ENCODE measurements at regions of chr1 and their contacts with region 1.

Region 1: GRCh38 chr1:110460253-110461220 is 9.6 kb downstream of the PROK1 start:
- DNase-seq: peak; percentile 77
- ATAC-seq: peak; percentile 84
- H3K4me3 ChIP-seq: no peak overlapping the region
- H3K27ac ChIP-seq: no peak overlapping the region
- H3K4me1 ChIP-seq: peaks cover 20% of the 10 kb centered on the region
- H3K27me3 ChIP-seq: peaks cover 15% of the 10 kb centered on the region
- CTCF ChIP-seq: peak; percentile 99
- POLR2A ChIP-seq: 0 out of 2 replicates have a peak, but pooled peaks have one; percentile 41
- RAD21 ChIP-seq: peak; percentile 100

Region 2: GRCh38 chr1:110053557-110054428 is 406.7 kb before region 1 on chr1:
- CTCF ChIA-PET with region 1: no interaction called
- POLR2A ChIA-PET with region 1: no interaction called
- dilution Hi-C with region 1: no loop called
- in situ Hi-C with region 1: loop called (anchors 10 kb)
- intact Hi-C with region 1: no loop called
- DNase-seq: peak; percentile 25
- ATAC-seq: peak; percentile 62
- H3K4me3 ChIP-seq: no peak overlapping the region
- H3K27ac ChIP-seq: no peak overlapping the region
- H3K4me1 ChIP-seq: peaks cover 36% of the 10 kb centered on the region
- H3K27me3 ChIP-seq: no peaks in the 10 kb centered on the region
- CTCF ChIP-seq: peak; percentile 89
- POLR2A ChIP-seq: no peak
- RAD21 ChIP-seq: peak; percentile 90

Region 3: GRCh38 chr1:110196917-110197765 is 263.4 kb before region 1 on chr1:
- CTCF ChIA-PET with region 1: interaction called, 30 read pairs
- POLR2A ChIA-PET with region 1: no interaction called
- dilution Hi-C with region 1: no loop called
- in situ Hi-C with region 1: loop called (anchors 5 kb)
- intact Hi-C with region 1: loop called (anchors 1 kb)
- DNase-seq: peak; percentile 41
- ATAC-seq: peak; percentile 97
- H3K4me3 ChIP-seq: no peak overlapping the region
- H3K27ac ChIP-seq: no peak overlapping the region
- H3K4me1 ChIP-seq: 0 out of 2 replicates have a peak, but pooled peaks cover 1% of the 10 kb centered on the region
- H3K27me3 ChIP-seq: peaks cover 9% of the 10 kb centered on the region
- CTCF ChIP-seq: peak; percentile 81
- POLR2A ChIP-seq: no peak
- RAD21 ChIP-seq: peak; percentile 70

Region 4: GRCh38 chr1:110209715-110210603 is 250.6 kb before region 1 on chr1 and contains the start of gene KCNC4:
- CTCF ChIA-PET with region 1: interaction called, 43 read pairs
- POLR2A ChIA-PET with region 1: no interaction called
- dilution Hi-C with region 1: no loop called
- in situ Hi-C with region 1: no loop called
- intact Hi-C with region 1: loop called (anchors 1 kb)
- DNase-seq: peak; percentile 58
- ATAC-seq: peak; percentile 84
- H3K4me3 ChIP-seq: peak within 1 kb of the TSS; percentile 49
- H3K27ac ChIP-seq: peak within 1 kb of the TSS; percentile 22; the same call in 1 of the 2 replicates
- H3K4me1 ChIP-seq: no peaks in the 10 kb centered on the region
- H3K27me3 ChIP-seq: peaks cover 51% of the 10 kb centered on the region
- CTCF ChIP-seq: no peak
- POLR2A ChIP-seq: no peak
- RAD21 ChIP-seq: no peak
- total RNA-seq, gene KCNC4: 0.18 and 0.28 TPM in 2 replicates

Region 5: DNA sequence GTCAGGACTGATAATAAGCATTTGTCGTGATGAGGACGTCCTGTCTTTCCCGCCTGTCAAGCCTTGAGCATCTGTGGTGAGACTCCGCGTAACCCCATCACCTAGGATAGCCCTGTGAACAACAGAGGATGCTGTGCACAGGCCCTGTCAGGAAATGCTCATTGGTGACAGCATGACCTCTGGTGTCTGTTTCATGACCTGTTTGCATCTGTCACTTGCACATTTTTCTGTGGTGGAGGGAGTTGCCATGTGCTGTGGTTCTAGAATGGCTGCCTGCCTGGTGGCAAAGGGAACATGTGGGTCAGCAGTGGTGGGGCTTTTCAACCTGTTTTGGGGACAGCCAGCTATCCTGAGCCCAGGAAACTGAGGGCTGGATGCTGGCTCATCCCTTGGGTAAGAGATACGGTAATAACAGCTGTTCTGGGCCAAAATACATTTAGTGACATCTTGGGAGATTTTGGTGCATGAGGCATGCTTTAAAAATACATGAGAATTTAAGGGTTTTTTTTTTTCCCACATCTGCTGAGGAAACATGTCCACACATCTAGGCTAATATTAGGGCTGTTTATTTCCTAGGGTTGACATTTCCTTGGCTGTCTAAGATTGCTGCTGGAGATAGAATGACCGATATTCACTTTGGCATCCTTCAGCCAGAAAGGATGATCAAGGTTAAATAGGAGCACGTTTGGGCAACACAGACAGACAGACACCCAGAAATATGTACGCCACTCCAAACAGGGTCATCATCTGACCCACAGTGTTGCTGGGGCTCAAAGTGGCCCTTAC is 197.5 kb before region 1 on chr1:
- CTCF ChIA-PET with region 1: no interaction called
- POLR2A ChIA-PET with region 1: no interaction called
- dilution Hi-C with region 1: no loop called
- in situ Hi-C with region 1: no loop called
- intact Hi-C with region 1: no loop called
- DNase-seq: no peak
- ATAC-seq: no peak
- H3K4me3 ChIP-seq: no peak overlapping the region
- H3K27ac ChIP-seq: no peak overlapping the region
- H3K4me1 ChIP-seq: no peaks in the 10 kb centered on the region
- H3K27me3 ChIP-seq: peaks cover 38% of the 10 kb centered on the region
- CTCF ChIP-seq: no peak
- POLR2A ChIP-seq: no peak
- RAD21 ChIP-seq: no peak

Region 6: GRCh38 chr1:110338886-110339406 is 121.6 kb before region 1 on chr1 and contains the start of gene RBM15:
- CTCF ChIA-PET with region 1: interaction called, 4 read pairs
- POLR2A ChIA-PET with region 1: no interaction called
- dilution Hi-C with region 1: no loop called
- in situ Hi-C with region 1: loop called (anchors 10 kb)
- intact Hi-C with region 1: loop called (anchors 2 kb)
- DNase-seq: peak; percentile 100
- ATAC-seq: peak; percentile 83
- H3K4me3 ChIP-seq: peak within 1 kb of the TSS; percentile 64
- H3K27ac ChIP-seq: peak within 1 kb of the TSS; percentile 82
- H3K4me1 ChIP-seq: peaks cover 18% of the 10 kb centered on the region
- H3K27me3 ChIP-seq: no peaks in the 10 kb centered on the region
- CTCF ChIP-seq: no peak
- POLR2A ChIP-seq: no peak
- RAD21 ChIP-seq: no peak
- total RNA-seq, gene RBM15: 31.7 and 32.2 TPM in 2 replicates

Region 7: DNA sequence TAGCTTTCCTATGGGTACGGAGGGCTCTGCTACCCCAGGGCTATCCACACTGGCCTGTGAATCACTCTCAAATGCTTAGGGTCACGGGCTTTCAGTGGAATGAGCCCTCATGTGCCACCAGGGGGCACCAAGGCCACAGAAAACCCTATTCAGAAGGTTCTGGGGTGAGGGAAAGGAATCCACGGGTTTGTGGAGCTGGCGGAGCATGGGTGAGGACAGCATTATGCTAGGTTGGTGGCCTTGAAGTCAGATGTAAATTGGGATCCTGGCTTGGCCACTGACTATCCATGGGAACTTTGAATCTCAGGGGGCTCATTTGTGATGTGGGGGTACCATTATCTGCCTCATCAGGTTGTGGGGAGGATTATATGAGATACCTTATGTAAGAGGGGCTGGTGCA is 48.0 kb before region 1 on chr1:
- CTCF ChIA-PET with region 1: interaction called, 29 read pairs
- POLR2A ChIA-PET with region 1: no interaction called
- dilution Hi-C with region 1: no loop called
- in situ Hi-C with region 1: loop called (anchors 5 kb)
- intact Hi-C with region 1: loop called (anchors 1 kb)
- DNase-seq: peak; percentile 63
- ATAC-seq: peak; percentile 84
- H3K4me3 ChIP-seq: no peak overlapping the region
- H3K27ac ChIP-seq: no peak overlapping the region
- H3K4me1 ChIP-seq: peaks cover 2% of the 10 kb centered on the region; the same call in 1 of the 2 replicates
- H3K27me3 ChIP-seq: peaks cover 14% of the 10 kb centered on the region
- CTCF ChIP-seq: peak; percentile 75
- POLR2A ChIP-seq: no peak
- RAD21 ChIP-seq: peak; percentile 79

Measured in IMR-90 (cell line).